Activated T-helper 2 cell treated with anti-CD3 and anti-CD28 coated beads, Interferon-gamma antibody, Interleukin-2, Interleukin-4, amounts not matched to agents 10 μg/mL and 5 μg/mL and 100 μg/mL, durations not matched to agents 14 hours and 24 hours and 36 hours (primary cell): ENCODE measurements at regions of chr5 and their contacts with region 1.

Region 1: DNA sequence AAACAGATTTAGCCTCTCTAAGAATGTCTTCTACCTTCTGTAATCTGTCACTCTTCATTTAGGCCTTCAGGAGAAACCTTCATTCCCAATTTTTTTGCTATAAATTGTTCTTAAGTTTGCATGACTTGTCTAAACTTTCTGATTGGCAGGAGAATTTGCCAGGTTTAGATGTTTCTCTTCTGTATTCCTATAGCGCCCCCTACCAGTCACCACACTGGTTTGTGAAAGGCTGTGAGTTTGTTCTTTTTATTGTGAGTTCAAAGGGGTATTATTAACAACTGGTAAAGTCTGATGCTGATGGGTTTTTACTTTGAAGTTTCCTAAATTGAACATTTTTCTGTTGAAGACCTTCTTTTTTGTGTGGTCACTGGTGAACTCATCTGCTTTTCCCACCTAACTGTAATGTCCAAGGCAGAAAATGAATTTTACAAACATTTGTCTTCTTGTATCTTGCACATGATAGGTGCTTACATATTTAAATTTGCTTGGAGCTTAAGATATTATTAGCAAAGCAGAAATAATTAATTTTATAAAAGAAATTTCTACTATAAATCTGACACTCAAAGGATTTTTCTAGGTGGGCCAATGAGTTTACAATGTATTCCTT is 18.4 kb upstream of the F2RL2 start:
- DNase-seq: peak; percentile 37
- H3K4me3 Mint-ChIP-seq: no peak overlapping the region
- H3K27ac Mint-ChIP-seq: no peak overlapping the region
- H3K4me1 Mint-ChIP-seq: peaks cover 8% of the 10 kb centered on the region
- H3K27me3 Mint-ChIP-seq: no peaks in the 10 kb centered on the region

Region 2: DNA sequence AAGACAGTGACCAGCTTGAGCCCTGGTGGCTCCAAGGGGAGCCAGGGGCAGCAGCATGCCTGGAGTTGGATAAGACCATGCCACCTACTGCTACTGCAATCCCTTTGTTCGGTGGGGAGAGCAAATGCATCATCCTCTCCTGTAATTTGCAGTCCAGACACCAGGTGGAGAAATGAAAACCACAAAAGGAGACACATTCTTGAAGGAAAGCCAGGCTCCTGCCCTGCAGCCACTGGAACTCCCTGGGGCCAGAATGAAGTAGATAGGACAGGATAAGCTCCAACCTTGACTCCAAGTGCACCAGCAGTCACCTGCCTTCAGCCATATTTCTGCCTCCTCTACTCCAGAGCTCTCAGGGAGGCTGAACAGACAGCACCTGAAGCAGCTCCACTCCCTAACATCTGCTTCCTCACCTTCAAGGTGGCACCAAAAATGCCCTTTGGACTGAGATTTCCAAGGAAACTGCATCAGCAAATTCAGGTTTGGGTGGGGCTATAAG is 303.6 kb before region 1 on chr5:
- intact Hi-C with region 1: loop called (anchors 5 kb)
- DNase-seq: peak; percentile 26
- H3K4me3 Mint-ChIP-seq: no peak overlapping the region
- H3K27ac Mint-ChIP-seq: no peak overlapping the region
- H3K4me1 Mint-ChIP-seq: peaks cover 25% of the 10 kb centered on the region
- H3K27me3 Mint-ChIP-seq: no peaks in the 10 kb centered on the region

Region 3: GRCh38 chr5:76601470-76601869 is 40.1 kb before region 1 on chr5:
- intact Hi-C with region 1: loop called (anchors 1 kb)
- DNase-seq: no peak
- H3K4me3 Mint-ChIP-seq: no peak overlapping the region
- H3K27ac Mint-ChIP-seq: no peak overlapping the region
- H3K4me1 Mint-ChIP-seq: peaks cover 12% of the 10 kb centered on the region
- H3K27me3 Mint-ChIP-seq: no peaks in the 10 kb centered on the region